ENCODE measurements at regions of chr5 and their contacts with region 1.

Region 1: GRCh38 chr5:79728396-79728795 is 38.8 kb downstream of the CMYA5 start:
- DNase-seq: no peak
- H3K4me3 ChIP-seq: no peak overlapping the region
- H3K27ac ChIP-seq: no peak overlapping the region
- H3K27me3 ChIP-seq: no peaks in the 10 kb centered on the region
- CTCF ChIP-seq: no peak

Region 2: DNA sequence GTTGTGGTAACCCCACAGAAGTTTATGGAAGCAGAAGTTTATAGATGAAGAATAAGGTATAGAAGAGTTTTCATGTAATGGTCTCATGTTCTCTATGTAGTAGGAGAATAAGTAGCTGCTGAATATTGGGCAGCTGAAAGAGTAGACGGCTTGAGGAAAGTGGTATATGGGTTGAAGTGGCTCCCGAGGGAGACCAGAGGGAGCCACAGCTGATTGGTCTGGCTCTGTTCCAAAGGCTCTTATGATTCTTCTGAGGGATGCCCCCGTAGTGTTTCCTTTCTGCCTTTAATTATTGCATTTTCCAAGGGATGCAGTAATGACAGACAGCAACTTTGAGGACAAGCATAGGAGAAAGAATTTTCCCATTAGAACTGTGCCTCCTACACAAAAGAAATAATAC is 146.2 kb before region 1 on chr5:
- intact Hi-C with region 1: loop called in 1 of 2 experiments (anchors 5 kb)
- DNase-seq: no peak
- H3K4me3 ChIP-seq: no peak overlapping the region
- H3K27ac ChIP-seq: no peak overlapping the region
- H3K27me3 ChIP-seq: no peaks in the 10 kb centered on the region
- CTCF ChIP-seq: no peak